Naive thymus-derived CD4-positive, alpha-beta T cell (primary cell): ENCODE measurements at regions of chr19 and their contacts with region 1.

Region 1: GRCh38 chr19:57914531-57914930 is 1.9 kb downstream of the ZNF417 start:
- DNase-seq: no peak
- ATAC-seq: no peak
- H3K4me3 ChIP-seq: peak overlapping the region; percentile 43
- H3K4me3 Mint-ChIP-seq: peak overlapping the region; percentile 93 to 99 (median 97)
- H3K27ac ChIP-seq: no peak overlapping the region
- H3K27ac Mint-ChIP-seq: peak overlapping the region in 5 of 9 donors; percentile 6 to 73 (median 47)
- H3K4me1 ChIP-seq: peaks cover 9 to 10% of the 10 kb centered on the region in 2 donors
- H3K4me1 Mint-ChIP-seq: peaks cover 21 to 39% (median 36%) of the 10 kb centered on the region in 7 donors
- H3K27me3 ChIP-seq: no peaks in the 10 kb centered on the region
- H3K27me3 Mint-ChIP-seq: no peaks in the 10 kb centered on the region

Region 2: DNA sequence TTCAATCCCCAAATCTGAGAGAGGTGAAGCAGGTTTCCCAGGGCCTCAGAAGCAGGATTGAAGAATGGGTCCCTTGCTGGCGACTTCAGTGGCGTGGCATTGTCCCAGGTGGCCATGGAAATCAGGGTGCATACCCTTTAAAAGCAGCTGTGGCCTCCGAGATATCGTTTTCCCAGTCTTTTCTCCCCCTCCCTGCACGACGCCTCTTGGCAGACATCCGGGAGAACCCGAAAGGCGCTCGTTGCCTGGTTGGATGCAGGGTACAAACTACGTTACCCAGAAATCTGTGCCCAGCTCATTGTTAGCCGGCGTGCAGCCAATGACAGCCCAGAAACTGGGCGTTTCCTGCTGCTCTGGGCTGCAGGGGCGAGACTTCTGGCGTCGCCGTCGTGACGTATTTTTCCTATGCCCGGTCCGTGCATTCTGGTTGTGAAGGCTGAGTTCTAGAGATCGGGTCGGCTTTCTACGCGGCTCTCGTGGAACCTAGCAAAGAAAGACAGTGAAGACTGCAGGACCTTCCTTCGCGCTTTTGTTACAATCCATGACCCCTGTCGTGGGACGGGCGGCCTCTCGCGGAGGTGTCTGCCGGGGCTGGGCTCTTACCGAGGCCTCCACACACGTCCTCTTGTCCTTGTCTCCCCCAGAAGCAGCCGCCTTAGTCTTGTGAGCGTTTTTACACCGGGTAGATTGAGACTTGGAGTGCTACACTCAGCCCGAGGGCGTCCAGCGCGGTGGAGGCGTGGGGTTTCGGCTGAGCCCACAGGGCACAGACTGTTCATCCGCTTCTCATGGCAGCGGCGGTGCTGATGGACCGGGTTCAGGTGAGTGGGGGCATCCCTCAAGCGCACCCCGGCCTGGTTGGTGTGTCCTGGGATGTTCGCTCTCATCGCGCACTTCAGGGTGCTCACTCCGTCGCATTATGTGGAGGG is 563.4 kb before region 1 on chr19 and contains the start of gene ZNF304:
- CTCF ChIA-PET with region 1: no interaction called
- POLR2A ChIA-PET with region 1: no interaction called
- intact Hi-C with region 1: loop called in 1 of 2 experiments (anchors 1 kb)
- DNase-seq: peak; percentile 51 to 85 (median 76)
- ATAC-seq: peak; percentile 100
- H3K4me3 ChIP-seq: peak within 1 kb of the TSS; percentile 83
- H3K4me3 Mint-ChIP-seq: peak within 1 kb of the TSS; percentile 93 to 97 (median 96)
- H3K27ac ChIP-seq: peak within 1 kb of the TSS; percentile 77
- H3K27ac Mint-ChIP-seq: peak within 1 kb of the TSS; percentile 80 to 96 (median 92)
- H3K4me1 ChIP-seq: peaks cover 11% of the 10 kb centered on the region in 2 donors
- H3K4me1 Mint-ChIP-seq: peaks cover 28 to 43% (median 32%) of the 10 kb centered on the region in 7 donors
- H3K27me3 ChIP-seq: no peaks in the 10 kb centered on the region
- H3K27me3 Mint-ChIP-seq: peaks cover 0 to 11% (median 7%) of the 10 kb centered on the region in 5 donors
- total RNA-seq, gene ZNF304: 6.0 to 12.5 (median 9.0) TPM

Region 3: GRCh38 chr19:57527136-57527881 is 387.2 kb before region 1 on chr19 and contains the start of gene ZNF549:
- CTCF ChIA-PET with region 1: no interaction called
- POLR2A ChIA-PET with region 1: no interaction called
- intact Hi-C with region 1: loop called in 1 of 2 experiments (anchors 1 kb)
- DNase-seq: peak; percentile 65 to 90 (median 88)
- ATAC-seq: peak; percentile 99
- H3K4me3 ChIP-seq: peak within 1 kb of the TSS; percentile 98
- H3K4me3 Mint-ChIP-seq: peak within 1 kb of the TSS; percentile 89 to 98 (median 96)
- H3K27ac ChIP-seq: peak within 1 kb of the TSS; percentile 94
- H3K27ac Mint-ChIP-seq: peak within 1 kb of the TSS; percentile 80 to 98 (median 95)
- H3K4me1 ChIP-seq: peaks cover 14 to 18% of the 10 kb centered on the region in 2 donors
- H3K4me1 Mint-ChIP-seq: peaks cover 15 to 36% (median 32%) of the 10 kb centered on the region in 7 donors
- H3K27me3 ChIP-seq: no peaks in the 10 kb centered on the region
- H3K27me3 Mint-ChIP-seq: peaks cover 0 to 4% (median 0%) of the 10 kb centered on the region in 5 donors
- total RNA-seq, gene ZNF549: 6.9 to 24.8 (median 11.3) TPM

Region 4: DNA sequence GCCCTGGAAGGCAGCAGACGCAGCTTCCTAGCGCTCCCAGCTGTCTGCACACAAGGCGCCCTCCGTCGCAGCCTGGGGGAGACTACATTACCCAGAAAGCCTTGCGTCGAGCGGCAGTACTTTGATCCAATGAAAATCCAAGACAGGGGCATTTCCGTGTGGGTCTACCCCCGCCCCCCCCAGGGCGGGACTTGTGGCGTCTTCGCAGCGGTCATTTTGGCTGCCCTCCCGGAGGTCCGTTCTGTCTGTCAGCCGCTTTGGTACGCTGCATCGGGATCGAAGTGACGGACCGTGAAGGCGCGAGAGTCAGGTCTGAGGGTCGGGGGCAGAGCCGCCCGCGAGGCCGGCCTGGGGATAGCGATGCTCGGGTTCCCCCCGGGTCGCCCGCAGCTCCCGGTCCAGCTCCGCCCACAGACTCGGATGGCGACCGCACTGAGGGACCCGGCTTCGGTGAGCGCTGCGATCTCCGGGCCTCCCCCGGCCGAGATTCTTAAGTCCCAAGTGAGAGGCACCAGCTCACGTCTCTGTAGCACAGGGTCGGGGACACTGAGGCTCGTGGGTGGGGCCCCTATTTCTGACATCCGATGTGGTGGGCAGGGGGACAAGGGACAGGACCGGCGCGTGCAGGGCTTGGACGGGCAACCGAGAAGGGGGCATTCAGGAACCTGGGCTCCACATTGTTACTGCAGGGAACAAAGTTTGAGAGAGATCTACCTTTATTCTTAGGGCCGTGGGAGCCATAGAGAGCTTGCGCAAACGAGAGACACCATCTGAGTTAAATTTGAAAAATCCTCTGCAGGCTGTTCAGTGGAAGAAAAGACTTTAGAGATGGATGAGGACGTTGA is 281.3 kb before region 1 on chr19 and contains the start of gene ZNF211:
- CTCF ChIA-PET with region 1: no interaction called
- POLR2A ChIA-PET with region 1: no interaction called
- intact Hi-C with region 1: loop called in 1 of 2 experiments (anchors 5 kb)
- DNase-seq: peak; percentile 74 to 89 (median 86)
- ATAC-seq: peak; percentile 100
- H3K4me3 ChIP-seq: peak within 1 kb of the TSS; percentile 87
- H3K4me3 Mint-ChIP-seq: peak within 1 kb of the TSS; percentile 87 to 97 (median 94)
- H3K27ac ChIP-seq: peak within 1 kb of the TSS; percentile 90
- H3K27ac Mint-ChIP-seq: peak within 1 kb of the TSS; percentile 81 to 97 (median 89)
- H3K4me1 ChIP-seq: peaks cover 3 to 13% of the 10 kb centered on the region in 2 donors
- H3K4me1 Mint-ChIP-seq: peaks cover 21 to 36% (median 28%) of the 10 kb centered on the region in 7 donors
- H3K27me3 ChIP-seq: no peaks in the 10 kb centered on the region
- H3K27me3 Mint-ChIP-seq: no peaks in the 10 kb centered on the region
- total RNA-seq, gene ZNF211: 18.0 to 56.7 (median 33.7) TPM

Region 5: DNA sequence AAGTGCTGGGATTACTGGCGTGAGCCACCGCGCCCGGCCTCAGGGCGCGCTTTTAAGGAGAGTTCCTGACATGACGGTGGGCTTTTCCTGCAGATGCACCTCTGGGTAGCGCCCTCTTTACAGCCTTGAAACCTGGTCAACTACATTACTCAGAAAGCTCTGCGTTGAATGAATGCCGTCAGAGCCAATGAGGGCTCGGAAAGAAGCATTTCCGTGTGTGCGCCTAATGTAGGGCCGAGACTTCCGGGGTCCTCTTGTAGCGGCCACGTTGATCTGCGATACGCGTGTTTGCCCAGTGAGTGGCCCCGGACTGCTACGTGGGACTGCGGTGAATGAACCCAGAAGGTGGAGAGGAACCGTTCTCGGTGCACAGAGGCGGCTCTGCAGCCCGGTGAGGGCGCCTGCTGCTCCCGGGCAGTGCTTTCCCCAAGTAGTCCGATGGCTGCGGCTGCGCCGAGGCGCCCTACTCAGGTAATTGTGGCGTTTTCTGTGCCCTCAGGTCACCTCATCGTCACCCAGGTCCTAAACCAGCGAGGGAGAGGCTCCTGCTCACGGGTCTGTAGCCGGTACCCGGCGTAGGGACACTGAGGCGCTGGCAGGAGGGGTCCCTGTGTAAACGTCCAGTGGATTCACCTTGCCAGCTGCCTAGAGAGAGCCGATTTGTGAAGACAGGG is 94.9 kb before region 1 on chr19:
- CTCF ChIA-PET with region 1: no interaction called
- POLR2A ChIA-PET with region 1: interaction called, 4 read pairs
- intact Hi-C with region 1: loop called in 1 of 2 experiments (anchors 2 kb)
- DNase-seq: peak; percentile 45 to 85 (median 79)
- ATAC-seq: peak; percentile 89
- H3K4me3 ChIP-seq: peak overlapping the region; percentile 98
- H3K4me3 Mint-ChIP-seq: peak overlapping the region; percentile 95 to 99 (median 98)
- H3K27ac ChIP-seq: peak overlapping the region; percentile 92
- H3K27ac Mint-ChIP-seq: peak overlapping the region; percentile 88 to 99 (median 95)
- H3K4me1 ChIP-seq: peaks cover 0 to 13% of the 10 kb centered on the region in 2 donors
- H3K4me1 Mint-ChIP-seq: peaks cover 38 to 73% (median 67%) of the 10 kb centered on the region in 7 donors
- H3K27me3 ChIP-seq: no peaks in the 10 kb centered on the region
- H3K27me3 Mint-ChIP-seq: no peaks in the 10 kb centered on the region

Region 6: GRCh38 chr19:58002384-58003173 is 88.0 kb after region 1 on chr19 and contains the start of gene ZNF606:
- CTCF ChIA-PET with region 1: no interaction called
- POLR2A ChIA-PET with region 1: interaction called, 8 read pairs
- intact Hi-C with region 1: loop called (anchors 1 kb)
- DNase-seq: peak; percentile 79 to 87 (median 85)
- ATAC-seq: peak; percentile 100
- H3K4me3 ChIP-seq: peak within 1 kb of the TSS; percentile 91
- H3K4me3 Mint-ChIP-seq: peak within 1 kb of the TSS; percentile 80 to 90 (median 88)
- H3K27ac ChIP-seq: peak within 1 kb of the TSS; percentile 90
- H3K27ac Mint-ChIP-seq: peak within 1 kb of the TSS; percentile 79 to 94 (median 88)
- H3K4me1 ChIP-seq: peaks cover 14 to 18% of the 10 kb centered on the region in 2 donors
- H3K4me1 Mint-ChIP-seq: peaks cover 15 to 40% (median 27%) of the 10 kb centered on the region in 7 donors
- H3K27me3 ChIP-seq: no peaks in the 10 kb centered on the region
- H3K27me3 Mint-ChIP-seq: no peaks in the 10 kb centered on the region
- total RNA-seq, gene ZNF606: 11.9 to 37.5 (median 15.3) TPM